HEK293 (cell line): ENCODE measurements at regions of chr21 and their contacts with region 1.

Region 1: GRCh38 chr21:42309753-42310221 is 5.4 kb downstream of the TFF3 start:
- H3K4me3 ChIP-seq: no peak overlapping the region
- H3K27ac ChIP-seq: no peak overlapping the region
- H3K4me1 ChIP-seq: no peaks in the 10 kb centered on the region
- CTCF ChIP-seq: peak; percentile 60

Region 2: GRCh38 chr21:42107881-42108553 is 201.8 kb before region 1 on chr21:
- CTCF ChIA-PET with region 1: no interaction called
- POLR2A ChIA-PET with region 1: no interaction called
- H3K4me3 ChIP-seq: no peak overlapping the region
- H3K27ac ChIP-seq: no peak overlapping the region
- H3K4me1 ChIP-seq: no peaks in the 10 kb centered on the region
- CTCF ChIP-seq: peak; percentile 87

Region 3: DNA sequence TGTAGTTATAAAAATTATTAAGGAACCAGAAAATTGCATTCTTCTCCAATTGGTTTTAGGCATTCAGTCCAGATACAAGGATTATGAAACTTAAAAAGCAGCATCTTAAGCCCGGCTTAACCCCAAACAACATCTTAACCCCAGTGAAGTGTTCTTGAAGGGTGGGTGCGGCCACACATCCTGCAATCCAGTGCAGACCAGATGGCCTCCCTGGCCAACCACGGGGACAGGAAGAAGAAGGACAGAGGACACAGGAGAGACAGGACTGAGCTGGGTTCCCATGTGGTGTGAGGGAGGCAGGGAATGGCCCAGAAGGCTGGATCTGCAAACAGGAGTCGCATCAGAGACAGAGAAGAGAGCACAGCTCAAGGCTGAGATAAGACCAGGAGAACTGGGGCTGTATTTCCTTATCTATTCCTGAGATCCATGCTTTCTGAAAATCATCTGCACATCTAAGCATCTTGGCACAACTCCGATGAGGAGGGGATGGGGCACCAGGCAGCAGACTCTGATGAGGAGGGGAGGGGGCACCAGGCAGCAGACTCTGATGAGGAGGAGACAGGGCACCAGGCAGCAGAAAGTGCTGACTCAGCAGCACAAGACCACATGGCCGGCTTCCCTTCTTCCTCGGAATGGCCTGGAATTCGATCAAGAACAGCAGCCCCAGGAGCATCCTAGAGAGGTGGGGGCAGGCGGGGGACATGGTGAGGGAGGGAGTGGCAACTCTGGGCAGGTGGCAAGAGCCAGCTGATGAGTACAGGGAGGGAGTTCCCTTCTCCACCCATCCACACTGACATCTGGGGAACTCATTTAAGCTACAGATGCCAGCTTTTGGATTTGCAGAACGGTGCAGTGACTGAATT is 64.2 kb before region 1 on chr21:
- CTCF ChIA-PET with region 1: interaction called, 10 read pairs
- POLR2A ChIA-PET with region 1: no interaction called
- H3K4me3 ChIP-seq: no peak overlapping the region
- H3K27ac ChIP-seq: no peak overlapping the region
- H3K4me1 ChIP-seq: no peaks in the 10 kb centered on the region
- CTCF ChIP-seq: no peak

Region 4: GRCh38 chr21:42324896-42325295 is 15.1 kb after region 1 on chr21:
- CTCF ChIA-PET with region 1: interaction called, 26 read pairs
- POLR2A ChIA-PET with region 1: no interaction called
- H3K4me3 ChIP-seq: no peak overlapping the region
- H3K27ac ChIP-seq: no peak overlapping the region
- H3K4me1 ChIP-seq: no peaks in the 10 kb centered on the region
- CTCF ChIP-seq: no peak

Region 5: DNA sequence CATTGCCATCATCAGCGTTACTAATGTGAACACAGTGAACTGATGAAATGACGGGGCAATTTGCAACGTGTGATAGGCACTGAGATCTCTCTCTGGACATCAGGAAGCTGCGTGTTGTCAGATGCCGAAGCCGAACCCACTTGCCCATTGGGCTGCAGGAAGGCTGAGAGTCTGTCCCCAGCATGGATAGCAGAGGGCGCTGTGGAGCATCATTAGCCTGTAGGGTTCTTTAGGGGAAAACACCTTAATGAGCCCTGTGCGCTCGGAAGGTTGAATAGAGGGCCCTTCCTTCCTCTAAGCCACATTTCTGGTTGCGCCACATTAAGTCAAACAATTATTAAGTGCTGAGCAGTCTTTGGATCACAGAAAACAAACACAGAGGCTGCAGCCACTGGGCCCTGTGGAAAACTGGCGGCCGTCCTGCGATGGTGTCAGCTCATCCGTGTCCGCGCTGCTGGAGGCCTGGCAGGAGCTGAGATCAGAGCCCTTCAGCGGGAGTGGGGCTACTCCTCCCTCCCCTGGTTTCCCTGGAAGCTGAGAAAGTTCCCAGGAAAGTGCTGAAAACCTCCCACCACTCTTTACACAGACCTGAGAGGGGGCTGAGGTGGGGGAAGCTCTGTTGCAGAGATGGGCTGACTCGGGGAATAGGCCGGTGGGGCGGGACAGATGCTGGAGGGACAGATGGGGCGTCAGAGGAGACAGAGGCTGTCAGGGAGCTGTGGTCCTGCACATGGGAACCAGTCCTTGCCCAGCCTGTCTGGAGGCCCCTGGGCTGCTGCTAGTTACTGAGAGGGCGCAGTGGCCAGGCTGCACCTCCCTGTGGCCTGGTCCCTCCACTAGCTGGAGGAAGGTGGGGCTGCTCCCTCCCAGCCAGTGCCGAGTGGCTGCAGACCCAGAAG is 28.3 kb after region 1 on chr21:
- CTCF ChIA-PET with region 1: interaction called, 26 read pairs
- POLR2A ChIA-PET with region 1: interaction called, 6 read pairs
- H3K4me3 ChIP-seq: no peak overlapping the region
- H3K27ac ChIP-seq: no peak overlapping the region
- H3K4me1 ChIP-seq: no peaks in the 10 kb centered on the region
- CTCF ChIP-seq: no peak

Region 6: GRCh38 chr21:42381334-42381984 is 71.7 kb after region 1 on chr21:
- CTCF ChIA-PET with region 1: interaction called, 13 read pairs
- POLR2A ChIA-PET with region 1: no interaction called
- H3K4me3 ChIP-seq: no peak overlapping the region
- H3K27ac ChIP-seq: no peak overlapping the region
- H3K4me1 ChIP-seq: no peaks in the 10 kb centered on the region
- CTCF ChIP-seq: no peak

Region 7: GRCh38 chr21:42449296-42449927 is 139.6 kb after region 1 on chr21:
- CTCF ChIA-PET with region 1: interaction called, 35 read pairs
- POLR2A ChIA-PET with region 1: no interaction called
- H3K4me3 ChIP-seq: no peak overlapping the region
- H3K27ac ChIP-seq: no peak overlapping the region
- H3K4me1 ChIP-seq: no peaks in the 10 kb centered on the region
- CTCF ChIP-seq: no peak